ENCODE measurements at regions of chrX and their contacts with region 1.

Region 1: DNA sequence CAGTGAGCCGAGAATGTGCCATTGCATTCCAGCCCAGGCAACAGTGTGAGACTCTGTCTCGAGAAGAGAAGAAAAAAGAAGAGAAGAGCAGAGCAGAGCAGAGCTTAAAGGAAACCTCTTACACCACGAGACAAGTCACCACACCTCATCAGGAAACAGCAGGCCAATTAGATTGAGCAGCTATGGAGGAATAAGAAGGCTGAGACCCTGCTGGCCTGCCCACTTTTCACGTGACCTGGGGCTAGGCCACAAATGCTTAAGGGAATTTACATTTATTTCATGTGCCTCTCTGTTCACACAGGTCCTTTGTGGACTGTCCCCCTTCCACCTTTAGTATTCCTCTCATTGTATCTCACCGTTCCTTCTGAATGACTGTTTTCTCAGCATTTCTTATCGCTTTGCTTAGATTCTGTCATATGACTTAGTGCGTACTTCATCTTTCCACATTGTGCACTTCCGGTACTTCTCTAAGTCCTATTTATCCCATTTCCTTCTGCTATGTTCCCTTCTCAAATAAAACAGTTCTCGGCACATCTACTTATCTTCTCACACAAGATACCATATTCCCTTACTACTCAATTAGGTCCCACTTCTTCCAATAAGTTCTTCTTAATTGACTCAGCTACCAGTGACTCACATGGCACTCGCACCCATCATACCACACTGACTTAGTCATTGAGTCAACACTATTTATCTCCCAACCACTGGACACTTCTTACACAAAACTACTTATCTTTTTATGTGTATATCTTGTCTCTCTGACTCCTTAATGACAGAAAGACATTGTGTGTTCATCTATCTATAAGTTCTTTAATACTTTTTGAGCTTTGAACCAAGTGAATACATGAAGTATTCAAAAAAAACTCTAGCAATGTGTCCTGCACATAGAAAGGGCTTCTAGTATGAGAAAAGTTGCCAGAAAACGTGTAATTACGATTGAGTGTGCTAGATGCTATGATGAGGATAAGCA is 11.0 kb downstream of the CUL4B start:
- DNase-seq: peak; percentile 43 to 65
- H3K4me3 ChIP-seq: no peak overlapping the region
- H3K27ac ChIP-seq: peak overlapping the region; percentile 47 to 63
- H3K4me1 ChIP-seq: peaks cover 0 to 14% (median 0%) of the 10 kb centered on the region in 4 donors
- H3K27me3 ChIP-seq: no peaks in the 10 kb centered on the region
- CTCF ChIP-seq: no peak

Region 2: DNA sequence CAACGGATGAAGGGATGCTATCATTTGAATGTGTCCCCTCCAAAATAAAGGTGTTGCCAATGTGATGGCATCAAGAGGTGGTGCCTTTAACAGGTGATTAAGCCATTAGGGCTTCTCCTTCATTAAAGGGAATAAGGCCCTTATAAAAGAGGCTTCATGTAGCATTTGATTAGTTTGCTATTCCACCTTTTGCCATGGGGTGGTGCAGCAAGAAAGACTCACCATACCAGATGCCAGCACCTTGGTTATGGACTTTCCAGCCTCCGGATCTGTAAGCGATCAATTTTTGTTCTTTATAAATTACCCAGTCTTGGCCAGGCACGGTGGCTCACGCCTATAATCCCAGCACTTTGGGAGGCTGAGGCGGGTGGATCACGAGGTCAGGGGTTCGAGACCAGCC is 1158.5 kb before region 1 on chrX:
- intact Hi-C with region 1: no loop called
- DNase-seq: no peak
- H3K4me3 ChIP-seq: no peak overlapping the region
- H3K27ac ChIP-seq: no peak overlapping the region
- H3K4me1 ChIP-seq: no peaks in the 10 kb centered on the region
- H3K27me3 ChIP-seq: no peaks in the 10 kb centered on the region
- CTCF ChIP-seq: no peak

Region 3: DNA sequence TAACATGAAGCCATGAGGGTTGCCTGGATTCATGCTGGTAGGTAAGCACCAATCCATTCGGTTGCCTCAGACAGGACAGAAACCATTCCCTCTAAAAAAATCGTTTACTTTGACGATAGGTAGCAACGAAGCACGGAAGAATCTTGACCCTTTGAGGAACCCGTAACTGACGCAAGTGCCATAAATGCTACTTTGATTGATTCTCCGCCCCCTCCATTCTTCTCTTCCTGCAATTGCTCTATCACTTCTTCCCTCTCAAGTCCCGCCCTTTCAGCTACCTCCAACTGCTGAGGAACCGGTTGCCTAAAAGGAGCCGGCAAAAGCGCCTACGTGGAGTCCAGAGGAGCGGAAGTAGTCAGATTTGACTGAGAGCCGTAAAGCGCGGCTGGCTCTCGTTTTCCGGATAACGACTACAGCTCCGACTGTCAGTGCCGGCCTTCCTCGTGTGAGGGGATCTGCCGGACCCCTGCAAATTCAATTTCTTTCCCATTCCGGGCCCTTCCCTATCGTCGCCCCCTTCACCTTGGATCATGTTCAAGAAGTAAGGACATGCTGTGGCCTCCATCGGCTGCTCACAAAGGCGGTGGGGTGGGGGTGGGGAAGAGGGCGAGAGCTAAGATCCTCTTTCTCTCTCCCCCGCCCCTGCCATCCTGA is 54.1 kb after region 1 on chrX and contains the start of gene MCTS1:
- intact Hi-C with region 1: loop called (anchors 10 kb)
- DNase-seq: peak; percentile 79 to 90
- H3K4me3 ChIP-seq: peak within 1 kb of the TSS; percentile 65
- H3K27ac ChIP-seq: peak within 1 kb of the TSS; percentile 82 to 89
- H3K4me1 ChIP-seq: peaks cover 0 to 10% (median 4%) of the 10 kb centered on the region in 4 donors
- H3K27me3 ChIP-seq: no peaks in the 10 kb centered on the region
- CTCF ChIP-seq: no peak

Measured in tibial artery (tissue), 4 donors.